Activated naive CD4-positive, alpha-beta T cell treated with anti-CD3 and anti-CD28 coated beads, Interleukin-2, amount 10 ng/mL, durations not matched to agents 7 days and 5 days (primary cell): ENCODE measurements at regions of chr3 and their contacts with region 1.

Region 1: GRCh38 chr3:185770109-185770508 is 54.7 kb downstream of the IGF2BP2 start:
- DNase-seq: no peak
- H3K4me3 Mint-ChIP-seq: no peak overlapping the region
- H3K27ac Mint-ChIP-seq: no peak overlapping the region
- H3K4me1 Mint-ChIP-seq: peaks cover 9% of the 10 kb centered on the region
- H3K27me3 Mint-ChIP-seq: peaks cover 16% of the 10 kb centered on the region

Region 2: GRCh38 chr3:185381320-185382058 is 388.6 kb before region 1 on chr3:
- CTCF ChIA-PET with region 1: no interaction called
- DNase-seq: no peak
- H3K4me3 Mint-ChIP-seq: no peak overlapping the region
- H3K27ac Mint-ChIP-seq: no peak overlapping the region
- H3K4me1 Mint-ChIP-seq: no peaks in the 10 kb centered on the region
- H3K27me3 Mint-ChIP-seq: peaks cover 3% of the 10 kb centered on the region

Region 3: DNA sequence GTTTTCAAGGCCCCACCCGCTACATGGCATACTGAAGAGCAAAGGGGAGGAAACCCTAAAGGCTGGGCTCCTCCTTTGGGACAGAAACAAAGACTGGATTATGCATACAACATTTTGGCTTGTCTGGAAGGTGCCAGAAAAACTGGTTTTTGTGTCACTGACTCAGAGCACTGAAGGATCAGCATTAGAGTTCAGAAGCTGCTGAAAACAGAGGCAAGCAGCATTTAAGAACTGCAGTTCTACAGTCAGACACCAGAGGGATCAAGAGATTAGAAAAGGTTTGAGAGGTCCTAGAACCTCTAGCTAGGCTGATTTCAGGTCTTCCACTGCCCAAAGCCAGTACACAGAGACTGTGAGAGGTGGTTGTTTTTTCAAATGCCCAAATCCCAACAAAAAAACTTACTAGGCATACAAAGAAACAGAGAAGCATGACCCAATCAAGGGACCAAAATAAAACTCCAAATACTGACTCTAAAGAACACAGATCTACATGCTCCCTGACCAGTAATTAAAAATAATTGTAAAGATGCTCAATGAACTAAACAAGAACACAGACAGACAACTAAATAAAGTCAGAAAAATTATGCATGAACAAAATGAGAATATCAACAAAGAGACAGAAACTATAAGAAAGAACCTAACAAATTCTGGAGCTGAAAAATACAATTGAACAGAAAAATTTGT is 92.8 kb before region 1 on chr3:
- CTCF ChIA-PET with region 1: interaction called, 20 read pairs
- DNase-seq: no peak
- H3K4me3 Mint-ChIP-seq: no peak overlapping the region
- H3K27ac Mint-ChIP-seq: no peak overlapping the region
- H3K4me1 Mint-ChIP-seq: no peaks in the 10 kb centered on the region
- H3K27me3 Mint-ChIP-seq: peaks cover 11% of the 10 kb centered on the region

Region 4: DNA sequence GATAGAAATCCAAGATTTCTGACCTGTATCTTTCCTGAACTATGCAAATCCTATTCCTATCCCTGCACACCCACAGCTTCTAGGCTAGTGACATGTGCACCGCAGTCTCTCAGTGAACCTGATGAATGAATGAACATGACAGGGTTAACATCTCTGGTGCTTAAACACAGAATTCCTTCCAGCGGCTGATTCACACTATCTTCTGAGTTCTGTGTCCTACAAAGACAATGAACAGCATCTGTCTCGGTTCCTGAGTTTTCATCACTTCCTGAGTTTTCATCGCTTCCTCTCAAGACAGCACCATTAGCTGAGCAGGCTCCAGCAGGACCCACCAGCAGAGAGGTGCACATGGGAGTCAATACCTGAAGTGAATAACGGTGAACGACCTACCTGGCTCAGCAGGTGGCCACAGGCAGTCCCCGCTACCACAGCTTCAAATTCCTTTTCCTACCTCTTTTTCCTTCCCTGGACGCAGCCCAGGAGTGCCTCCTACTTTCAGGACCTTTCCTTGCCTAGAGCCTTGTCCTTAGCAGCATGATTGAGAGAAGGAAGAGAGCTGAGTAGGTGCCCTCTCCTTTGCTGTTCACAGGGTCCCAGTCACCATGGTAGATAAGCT is 58.7 kb before region 1 on chr3:
- CTCF ChIA-PET with region 1: no interaction called
- DNase-seq: no peak
- H3K4me3 Mint-ChIP-seq: no peak overlapping the region
- H3K27ac Mint-ChIP-seq: no peak overlapping the region
- H3K4me1 Mint-ChIP-seq: no peaks in the 10 kb centered on the region
- H3K27me3 Mint-ChIP-seq: peaks cover 32% of the 10 kb centered on the region

Region 5: DNA sequence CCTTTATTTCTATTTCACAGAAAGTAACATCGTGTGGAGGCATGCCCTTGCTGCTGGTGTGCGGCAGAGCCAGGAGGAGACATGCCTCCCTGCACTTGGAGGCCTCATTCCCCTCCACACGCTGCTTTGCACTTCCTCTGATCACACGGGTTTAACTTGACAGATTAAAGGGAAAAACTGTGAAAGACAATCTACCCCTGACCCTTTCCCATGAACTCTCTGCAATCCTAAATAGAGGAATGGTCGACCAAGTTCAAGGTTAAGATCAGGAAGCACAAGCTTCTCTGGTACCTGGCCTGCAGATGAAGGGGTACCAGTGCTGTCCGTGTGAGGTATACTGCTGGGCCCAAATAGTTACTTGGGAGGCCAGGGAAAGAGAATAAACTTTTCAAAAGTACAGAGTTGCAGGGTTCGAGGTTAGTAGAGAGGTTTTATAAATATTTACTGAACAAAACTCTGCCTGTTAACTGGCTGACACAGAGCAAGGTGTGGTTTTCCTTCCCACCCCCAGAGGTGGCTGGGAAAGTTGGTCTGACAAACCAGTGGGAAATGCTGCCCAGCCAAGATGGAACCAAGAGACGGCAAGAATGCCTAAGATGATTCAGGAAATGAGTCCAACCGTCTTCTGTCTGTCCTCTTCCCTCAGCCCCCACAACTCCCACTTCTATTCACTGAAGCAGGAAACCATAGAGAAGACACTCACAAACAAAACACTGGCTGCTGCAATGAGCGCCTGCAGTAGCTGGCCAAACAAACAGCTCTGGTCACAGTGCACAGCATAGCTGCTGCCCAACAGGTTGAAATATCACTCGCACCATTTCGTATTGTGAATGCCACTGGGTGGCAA is 24.9 kb before region 1 on chr3:
- CTCF ChIA-PET with region 1: interaction called, 15 read pairs
- DNase-seq: no peak
- H3K4me3 Mint-ChIP-seq: no peak overlapping the region
- H3K27ac Mint-ChIP-seq: no peak overlapping the region
- H3K4me1 Mint-ChIP-seq: no peaks in the 10 kb centered on the region
- H3K27me3 Mint-ChIP-seq: peaks cover 17% of the 10 kb centered on the region